ENCODE measurements at regions of chr6 and their contacts with region 1.

Region 1: GRCh38 chr6:24283043-24283985 is 74.5 kb downstream of the DCDC2 start:
- DNase-seq: peak; percentile 63
- H3K4me3 ChIP-seq: no peak overlapping the region
- H3K27ac ChIP-seq: no peak overlapping the region
- H3K4me1 ChIP-seq: peaks cover 7% of the 10 kb centered on the region
- H3K27me3 ChIP-seq: no peaks in the 10 kb centered on the region
- CTCF ChIP-seq: peak; percentile 64 to 77

Region 2: GRCh38 chr6:23754197-23754596 is 529.1 kb before region 1 on chr6:
- CTCF ChIA-PET with region 1: no interaction called
- dilution Hi-C with region 1: no loop called
- in situ Hi-C with region 1: no loop called
- intact Hi-C with region 1: no loop called
- DNase-seq: no peak
- H3K4me3 ChIP-seq: no peak overlapping the region
- H3K27ac ChIP-seq: no peak overlapping the region
- H3K4me1 ChIP-seq: no peaks in the 10 kb centered on the region
- H3K27me3 ChIP-seq: no peaks in the 10 kb centered on the region
- CTCF ChIP-seq: no peak

Region 3: DNA sequence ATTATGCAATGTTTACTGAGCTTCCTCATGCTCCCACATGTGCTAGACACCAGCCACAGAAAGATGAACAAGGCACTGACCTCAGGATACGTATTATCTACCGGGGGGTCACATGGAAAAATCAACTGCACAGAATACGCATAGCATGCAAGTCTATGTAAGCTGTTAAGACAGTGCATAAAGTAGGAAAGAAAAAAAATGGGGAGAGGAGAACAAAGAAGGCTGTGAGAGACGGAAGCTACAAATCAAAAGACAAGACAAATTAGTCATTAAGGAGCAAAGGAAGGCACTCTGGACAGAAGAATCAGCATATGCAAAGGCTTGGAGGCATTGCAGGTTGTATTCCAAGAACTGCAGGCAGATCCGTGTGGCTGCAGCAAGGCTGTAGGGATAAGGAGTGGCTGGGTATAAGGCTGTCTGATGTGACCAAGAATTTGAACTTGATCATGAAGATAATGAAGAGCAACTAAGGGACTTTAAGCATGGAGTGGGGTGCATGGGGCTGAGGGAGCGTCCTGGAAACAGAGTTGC is 68.3 kb before region 1 on chr6:
- CTCF ChIA-PET with region 1: no interaction called
- dilution Hi-C with region 1: no loop called
- in situ Hi-C with region 1: no loop called
- intact Hi-C with region 1: no loop called
- DNase-seq: no peak
- H3K4me3 ChIP-seq: no peak overlapping the region
- H3K27ac ChIP-seq: no peak overlapping the region
- H3K4me1 ChIP-seq: no peaks in the 10 kb centered on the region
- H3K27me3 ChIP-seq: no peaks in the 10 kb centered on the region
- CTCF ChIP-seq: no peak

Region 4: DNA sequence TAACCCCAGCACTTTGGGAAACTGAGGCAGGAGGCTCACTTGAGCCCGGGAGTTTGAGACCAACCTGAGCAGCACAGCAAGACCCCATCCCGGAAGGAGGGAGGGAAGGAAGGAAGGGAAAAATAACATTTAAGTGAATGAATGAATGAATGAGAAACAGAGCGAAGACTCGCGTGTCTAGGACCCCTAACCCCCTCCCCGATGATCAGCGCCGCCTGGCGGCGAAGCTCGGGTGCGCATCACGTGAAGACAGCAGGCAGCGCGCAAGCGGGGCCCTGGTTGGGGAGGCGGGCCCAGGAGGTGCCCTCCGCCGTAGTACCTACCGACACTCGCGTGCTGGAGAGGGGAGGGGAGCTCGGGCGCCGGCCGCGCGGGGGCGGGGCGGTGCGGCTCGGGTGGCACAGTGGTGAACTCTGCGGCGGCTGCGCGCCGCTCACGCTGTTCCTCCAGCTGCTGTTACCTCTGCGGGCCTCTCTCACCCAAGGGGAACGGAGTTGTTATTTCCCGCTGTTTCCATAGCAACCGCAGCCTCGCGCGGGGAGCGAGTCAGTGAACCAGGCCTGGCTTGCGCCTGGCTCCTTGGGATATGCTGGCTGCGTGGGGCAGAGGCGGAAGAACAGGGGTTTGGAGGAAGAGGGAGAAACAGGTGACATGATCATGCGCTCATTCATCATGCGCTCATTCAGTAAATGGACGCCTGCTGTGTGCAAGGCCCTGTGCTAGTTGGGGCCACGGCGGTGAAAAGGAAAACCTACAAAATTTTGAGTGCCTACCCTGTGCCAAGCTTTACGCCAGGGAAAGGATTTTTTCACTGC is 76.5 kb after region 1 on chr6:
- CTCF ChIA-PET with region 1: interaction called, 5 read pairs
- dilution Hi-C with region 1: loop called (anchors 5 kb)
- in situ Hi-C with region 1: no loop called
- intact Hi-C with region 1: loop called (anchors 1 kb)
- DNase-seq: peak; percentile 74
- H3K4me3 ChIP-seq: peak overlapping the region; percentile 30 to 52 (median 46)
- H3K27ac ChIP-seq: no peak overlapping the region
- H3K4me1 ChIP-seq: peaks cover 10% of the 10 kb centered on the region
- H3K27me3 ChIP-seq: peaks cover 6% of the 10 kb centered on the region
- CTCF ChIP-seq: peak; percentile 73 to 89

Region 5: DNA sequence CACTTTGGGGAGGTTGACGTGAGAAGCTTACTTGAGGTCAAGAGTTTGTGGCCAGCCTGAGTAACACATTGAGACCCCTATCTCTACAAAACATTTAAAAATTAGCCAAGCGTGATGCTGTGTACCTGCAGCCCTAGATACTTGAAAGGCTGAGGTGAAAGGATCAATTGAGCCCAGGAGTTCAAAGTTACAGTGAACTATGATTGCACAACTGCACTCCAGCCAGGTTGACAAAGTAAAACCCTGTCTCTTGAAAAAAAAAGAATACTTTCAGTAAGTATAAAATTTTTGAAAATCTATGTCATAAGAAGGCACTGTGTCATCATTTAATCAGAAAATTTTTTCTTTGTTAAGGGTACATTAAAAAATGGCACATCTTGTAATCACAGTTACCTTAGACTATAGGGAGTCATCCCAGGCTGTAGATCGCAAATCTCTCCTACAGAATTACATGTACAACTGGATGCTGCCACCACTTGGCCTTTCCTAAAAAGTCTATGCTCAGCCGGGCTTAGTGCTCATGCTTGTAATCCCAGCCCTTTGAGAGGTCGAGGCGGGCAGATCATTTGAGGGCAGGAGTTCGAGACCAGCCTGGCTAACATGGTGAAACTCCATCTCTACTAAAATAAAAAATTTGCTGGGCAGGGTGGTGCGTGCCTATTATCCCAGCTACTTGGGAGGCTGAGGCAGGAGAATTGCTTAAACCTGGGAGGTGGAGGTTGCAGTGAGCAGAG is 102.4 kb after region 1 on chr6:
- CTCF ChIA-PET with region 1: interaction called, 20 read pairs
- dilution Hi-C with region 1: no loop called
- in situ Hi-C with region 1: loop called (anchors 5 kb)
- intact Hi-C with region 1: loop called (anchors 1 kb)
- DNase-seq: no peak
- H3K4me3 ChIP-seq: no peak overlapping the region
- H3K27ac ChIP-seq: no peak overlapping the region
- H3K4me1 ChIP-seq: peaks cover 5% of the 10 kb centered on the region
- H3K27me3 ChIP-seq: no peaks in the 10 kb centered on the region
- CTCF ChIP-seq: no peak

Region 6: GRCh38 chr6:24394780-24395437 is 111.6 kb after region 1 on chr6:
- CTCF ChIA-PET with region 1: no interaction called
- dilution Hi-C with region 1: no loop called
- in situ Hi-C with region 1: loop called in 1 of 2 experiments (anchors 5 kb)
- intact Hi-C with region 1: no loop called
- DNase-seq: peak; percentile 85
- H3K4me3 ChIP-seq: no peak overlapping the region
- H3K27ac ChIP-seq: no peak overlapping the region
- H3K4me1 ChIP-seq: peaks cover 9% of the 10 kb centered on the region
- H3K27me3 ChIP-seq: no peaks in the 10 kb centered on the region
- CTCF ChIP-seq: no peak

Region 7: DNA sequence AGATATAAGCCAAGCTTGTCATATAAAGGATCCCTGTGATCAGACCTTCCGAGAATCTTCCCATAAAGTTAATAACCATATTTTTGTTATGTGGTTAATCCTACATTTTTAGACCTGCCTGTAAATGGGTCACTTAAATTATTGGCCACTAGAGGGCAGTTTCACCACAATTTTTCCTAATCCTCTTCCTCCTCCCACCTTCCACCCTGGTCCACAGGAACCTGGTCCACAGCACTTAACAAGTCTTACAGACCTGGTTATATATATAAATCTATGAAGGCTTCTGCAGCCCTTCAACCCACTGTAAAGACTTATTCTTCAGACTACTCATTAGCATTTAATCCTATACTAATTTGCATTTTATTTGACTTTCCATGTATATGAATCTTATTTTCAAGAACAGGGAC is 147.7 kb after region 1 on chr6:
- CTCF ChIA-PET with region 1: no interaction called
- dilution Hi-C with region 1: no loop called
- in situ Hi-C with region 1: no loop called
- intact Hi-C with region 1: no loop called
- DNase-seq: peak; percentile 20
- H3K4me3 ChIP-seq: no peak overlapping the region
- H3K27ac ChIP-seq: no peak overlapping the region
- H3K4me1 ChIP-seq: no peaks in the 10 kb centered on the region
- H3K27me3 ChIP-seq: no peaks in the 10 kb centered on the region
- CTCF ChIP-seq: peak; percentile 56 to 66

Region 8: DNA sequence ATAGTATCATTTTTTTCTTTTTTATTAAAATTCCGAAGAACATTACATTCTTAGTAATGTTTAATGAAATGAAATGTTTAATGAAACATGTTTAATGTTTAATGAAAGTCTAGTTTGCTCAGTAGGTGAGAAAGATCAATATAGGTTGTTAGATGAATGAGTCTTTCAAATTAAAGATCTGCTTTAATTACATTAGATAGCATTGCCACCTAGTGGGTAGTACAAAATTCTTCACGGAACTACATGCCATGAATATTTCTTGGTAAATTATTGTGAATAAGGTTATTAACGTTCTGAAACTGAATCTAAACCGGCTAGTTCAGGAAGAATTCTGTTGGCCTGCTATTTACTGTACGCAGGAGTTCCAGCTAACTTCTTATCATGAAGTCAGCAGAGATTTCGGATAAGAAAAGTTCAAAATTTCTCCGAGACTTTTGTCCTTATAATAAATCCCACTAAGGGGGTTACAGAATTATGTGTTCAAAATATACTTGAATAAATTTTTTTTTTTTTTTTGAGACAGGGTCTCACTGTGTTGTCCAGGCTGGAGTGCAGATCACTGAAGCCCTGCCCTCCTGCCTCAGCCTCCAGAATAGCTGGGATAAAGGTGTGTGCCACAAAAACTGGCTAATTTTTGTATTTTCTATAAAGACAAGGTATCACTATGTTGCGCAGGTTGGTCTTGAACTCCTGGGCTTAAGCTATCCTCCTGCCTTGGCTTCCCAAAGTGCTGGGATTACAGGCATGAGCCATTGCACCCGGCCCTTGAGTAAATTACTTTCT is 483.6 kb after region 1 on chr6:
- CTCF ChIA-PET with region 1: no interaction called
- dilution Hi-C with region 1: no loop called
- in situ Hi-C with region 1: no loop called
- intact Hi-C with region 1: loop called (anchors 5 kb)
- DNase-seq: peak; percentile 20
- H3K4me3 ChIP-seq: no peak overlapping the region
- H3K27ac ChIP-seq: no peak overlapping the region
- H3K4me1 ChIP-seq: peaks cover 4% of the 10 kb centered on the region
- H3K27me3 ChIP-seq: no peaks in the 10 kb centered on the region
- CTCF ChIP-seq: peak; percentile 39 to 49

Measured in mammary epithelial cell (primary cell).